Dorsolateral prefrontal cortex (tissue), 120 donors: ENCODE measurements at regions of chr1 and their contacts with region 1.

Region 1: DNA sequence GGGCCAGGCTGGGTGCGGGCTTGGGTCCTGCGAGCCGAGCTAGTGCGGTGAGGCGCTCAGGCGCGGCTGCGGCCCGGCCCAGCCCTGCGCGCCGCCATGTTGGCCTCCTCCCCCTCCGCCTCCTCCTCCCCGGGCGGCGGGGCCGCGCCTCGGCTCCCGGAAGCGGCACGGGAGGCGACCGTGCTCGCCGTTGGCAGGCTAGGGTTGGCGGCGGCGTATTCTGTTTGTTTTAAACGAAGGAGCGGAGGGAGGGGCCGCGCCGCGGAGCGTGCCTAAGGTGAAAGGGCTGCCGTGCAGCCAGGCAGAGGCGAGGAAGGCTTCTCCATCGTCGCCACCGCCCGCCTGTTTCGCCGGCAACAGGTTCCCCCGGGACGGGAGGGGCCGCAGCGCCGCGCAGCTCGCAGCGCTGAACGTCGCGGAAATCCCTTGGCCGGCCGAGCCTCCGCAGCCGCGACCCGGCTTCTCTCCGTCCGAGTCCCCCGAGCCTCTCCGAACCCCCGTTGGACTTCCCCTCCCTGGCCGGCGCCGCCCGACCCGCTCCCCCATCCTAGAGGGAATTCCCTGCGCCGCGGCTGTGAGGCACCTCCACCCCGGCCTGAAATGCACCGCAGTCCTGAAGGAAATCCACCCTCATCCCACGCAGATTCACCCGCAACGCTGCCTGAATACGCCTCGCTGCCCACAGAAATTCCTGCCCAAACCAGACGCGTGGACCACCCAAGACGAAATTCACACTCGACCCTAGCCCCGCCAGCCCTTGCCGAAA is at the start of gene USP24:
- DNase-seq: peak; percentile 46 to 84 (median 64)
- H3K4me3 ChIP-seq: peak within 1 kb of the TSS; percentile 71 to 98 (median 88)
- H3K27ac ChIP-seq: peak within 1 kb of the TSS; percentile 61 to 99 (median 96)
- H3K27me3 ChIP-seq: no peaks in the 10 kb centered on the region
- CTCF ChIP-seq: peak in 17 of 56 donors; percentile 1 to 49 (median 16)
- total RNA-seq, gene USP24: 40.6 to 86.1 (median 55.6) TPM

Region 2: DNA sequence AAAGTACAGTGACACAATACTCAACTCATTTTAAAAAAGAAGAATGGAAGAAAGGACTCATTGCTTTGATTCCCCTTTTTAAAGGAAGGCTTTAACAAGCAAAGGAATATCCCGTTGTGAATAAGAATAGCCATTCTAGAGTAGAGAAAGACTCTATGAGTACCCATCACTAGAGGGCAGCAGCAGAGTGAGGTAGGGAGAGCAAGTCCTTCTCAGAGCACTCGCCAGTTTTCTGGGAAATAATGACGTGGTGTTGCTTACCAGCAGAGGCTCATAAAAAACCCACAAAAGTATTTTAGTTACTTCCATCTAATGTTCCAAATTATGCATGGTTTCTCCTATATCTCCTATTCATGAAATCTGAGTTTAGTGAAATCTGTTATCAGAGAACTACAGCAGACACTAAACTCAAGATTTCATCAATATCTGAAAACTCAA is 74.9 kb before region 1 on chr1:
- intact Hi-C with region 1: loop called in 1 of 2 experiments (anchors 5 kb)
- DNase-seq: peak in 8 of 10 donors; percentile 43 to 76 (median 58)
- H3K4me3 ChIP-seq: no peak overlapping the region
- H3K27ac ChIP-seq: peak overlapping the region in 13 of 59 donors; percentile 3 to 68 (median 29)
- H3K27me3 ChIP-seq: no peaks in the 10 kb centered on the region
- CTCF ChIP-seq: peak; percentile 69 to 97 (median 86)

Region 3: GRCh38 chr1:55155514-55155913 is 59.9 kb before region 1 on chr1:
- intact Hi-C with region 1: loop called in 1 of 2 experiments (anchors 10 kb)
- DNase-seq: peak; percentile 22 to 77 (median 54)
- H3K4me3 ChIP-seq: no peak overlapping the region
- H3K27ac ChIP-seq: peak overlapping the region in 17 of 59 donors; percentile 0 to 71 (median 48)
- H3K27me3 ChIP-seq: no peaks in the 10 kb centered on the region
- CTCF ChIP-seq: no peak

Region 4: DNA sequence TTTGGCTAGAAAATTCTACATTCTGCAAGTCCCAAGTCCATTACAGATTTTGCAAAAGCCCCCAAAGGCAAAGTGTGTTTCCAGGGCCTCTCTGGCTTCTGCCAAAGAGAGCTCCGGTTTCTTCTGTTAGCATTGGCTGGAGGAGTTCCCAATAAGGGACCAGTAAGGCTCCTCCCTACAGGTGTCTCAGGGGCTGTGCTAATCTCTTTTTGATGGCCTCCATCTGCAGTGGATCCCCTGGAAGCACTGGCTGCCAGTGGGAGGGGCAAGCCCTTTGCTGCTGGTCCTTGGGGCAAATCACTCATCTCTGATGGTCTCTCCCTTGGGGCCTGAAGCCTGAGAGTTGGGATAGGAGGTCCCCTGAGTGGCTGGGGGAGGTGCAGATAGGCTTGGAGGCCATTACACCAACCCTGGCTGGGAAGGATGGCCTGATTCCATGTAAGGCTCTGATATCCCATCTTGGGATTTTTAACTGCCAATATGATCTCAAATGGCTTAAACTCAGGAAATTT is 88.8 kb after region 1 on chr1:
- intact Hi-C with region 1: no loop called
- DNase-seq: no peak
- H3K4me3 ChIP-seq: no peak overlapping the region
- H3K27ac ChIP-seq: no peak overlapping the region
- H3K27me3 ChIP-seq: peaks cover 0 to 7% (median 0%) of the 10 kb centered on the region in 45 donors
- CTCF ChIP-seq: no peak